Activated CD8-positive, alpha-beta memory T cell treated with anti-CD3 and anti-CD28 coated beads, Interleukin-2, amount 10 ng/mL, durations not matched to agents 7 days and 5 days (primary cell): ENCODE measurements at regions of chr17 and their contacts with region 1.

Region 1: GRCh38 chr17:3602499-3602898 is 6.7 kb downstream of the TRPV1 start:
- DNase-seq: no peak
- ATAC-seq: no peak
- H3K4me3 Mint-ChIP-seq: no peak overlapping the region
- H3K27ac Mint-ChIP-seq: no peak overlapping the region
- H3K4me1 Mint-ChIP-seq: no peaks in the 10 kb centered on the region
- H3K27me3 Mint-ChIP-seq: no peaks in the 10 kb centered on the region

Region 2: DNA sequence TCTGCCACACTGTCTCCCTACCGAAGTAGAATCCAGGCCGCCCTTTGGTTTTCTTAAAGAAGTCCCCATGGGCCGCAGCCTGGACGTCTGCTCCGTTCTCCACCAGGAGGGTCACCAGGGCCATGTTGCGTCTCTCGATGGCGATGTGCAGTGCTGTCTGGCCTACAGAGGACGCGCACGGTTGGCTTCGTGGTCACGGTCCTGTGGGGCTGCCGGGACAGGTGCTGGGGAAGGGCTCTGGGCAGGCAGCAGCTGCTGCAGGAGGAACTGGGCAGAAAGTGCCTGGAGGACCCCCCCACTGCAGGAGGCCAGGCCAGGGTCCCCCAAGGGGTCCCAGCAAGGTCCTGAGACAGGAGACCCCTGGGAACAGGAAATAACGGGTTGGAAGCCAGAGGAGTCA is 12.3 kb before region 1 on chr17:
- CTCF ChIA-PET with region 1: no interaction called
- DNase-seq: no peak
- ATAC-seq: no peak
- H3K4me3 Mint-ChIP-seq: no peak overlapping the region
- H3K27ac Mint-ChIP-seq: no peak overlapping the region
- H3K4me1 Mint-ChIP-seq: no peaks in the 10 kb centered on the region
- H3K27me3 Mint-ChIP-seq: no peaks in the 10 kb centered on the region

Region 3: GRCh38 chr17:3647769-3648555 is 45.5 kb after region 1 on chr17:
- CTCF ChIA-PET with region 1: interaction called, 19 read pairs
- DNase-seq: peak; percentile 57
- ATAC-seq: peak; percentile 61
- H3K4me3 Mint-ChIP-seq: no peak overlapping the region
- H3K27ac Mint-ChIP-seq: no peak overlapping the region
- H3K4me1 Mint-ChIP-seq: peaks cover 17% of the 10 kb centered on the region
- H3K27me3 Mint-ChIP-seq: no peaks in the 10 kb centered on the region